Activated naive CD8-positive, alpha-beta T cell treated with anti-CD3 and anti-CD28 coated beads, Interleukin-2, amount 10 ng/mL, durations not matched to agents 7 days and 5 days (primary cell): ENCODE measurements at regions of chr17 and their contacts with region 1.

Region 1: GRCh38 chr17:43316522-43317142 is 82.2 kb upstream of the ARL4D start:
- DNase-seq: peak; percentile 47
- ATAC-seq: no peak
- H3K4me3 Mint-ChIP-seq: no peak overlapping the region
- H3K27ac Mint-ChIP-seq: peak overlapping the region; percentile 68
- H3K4me1 Mint-ChIP-seq: peaks cover 7% of the 10 kb centered on the region
- H3K27me3 Mint-ChIP-seq: no peaks in the 10 kb centered on the region

Region 2: DNA sequence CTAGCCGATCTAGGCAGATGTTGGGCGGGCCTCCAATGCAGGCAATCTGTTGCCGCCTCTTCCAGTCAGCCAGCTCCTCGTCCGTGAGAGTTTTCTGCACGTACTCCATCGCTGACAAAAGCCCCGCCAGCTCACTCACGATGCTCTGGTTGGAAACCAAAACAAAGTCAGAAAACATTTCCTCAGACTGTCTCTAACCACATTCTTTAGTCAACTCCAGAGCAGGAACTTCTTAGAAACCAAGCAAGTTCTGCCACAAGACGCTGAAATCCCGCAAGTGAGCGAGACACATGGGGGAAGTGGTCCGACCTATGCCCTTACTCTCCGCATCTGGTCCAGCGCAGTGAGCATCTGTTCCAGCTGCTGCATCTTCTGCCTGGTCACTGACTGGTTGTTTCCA is 979.2 kb before region 1 on chr17:
- POLR2A ChIA-PET with region 1: no interaction called
- DNase-seq: peak; percentile 63
- ATAC-seq: peak; percentile 78
- H3K4me3 Mint-ChIP-seq: peak overlapping the region; percentile 74
- H3K27ac Mint-ChIP-seq: peak overlapping the region; percentile 84
- H3K4me1 Mint-ChIP-seq: peaks cover 50% of the 10 kb centered on the region
- H3K27me3 Mint-ChIP-seq: no peaks in the 10 kb centered on the region

Region 3: GRCh38 chr17:43024407-43025289 is 292.0 kb before region 1 on chr17 and contains the start of gene RND2:
- POLR2A ChIA-PET with region 1: interaction called, 13 read pairs
- DNase-seq: peak; percentile 73
- ATAC-seq: peak; percentile 61
- H3K4me3 Mint-ChIP-seq: peak within 1 kb of the TSS; percentile 87
- H3K27ac Mint-ChIP-seq: peak within 1 kb of the TSS; percentile 43
- H3K4me1 Mint-ChIP-seq: peaks cover 15% of the 10 kb centered on the region
- H3K27me3 Mint-ChIP-seq: peaks cover 28% of the 10 kb centered on the region
- total RNA-seq, gene RND2: 0.14 TPM in 1 of 2 experiments, not detected in the other

Region 4: DNA sequence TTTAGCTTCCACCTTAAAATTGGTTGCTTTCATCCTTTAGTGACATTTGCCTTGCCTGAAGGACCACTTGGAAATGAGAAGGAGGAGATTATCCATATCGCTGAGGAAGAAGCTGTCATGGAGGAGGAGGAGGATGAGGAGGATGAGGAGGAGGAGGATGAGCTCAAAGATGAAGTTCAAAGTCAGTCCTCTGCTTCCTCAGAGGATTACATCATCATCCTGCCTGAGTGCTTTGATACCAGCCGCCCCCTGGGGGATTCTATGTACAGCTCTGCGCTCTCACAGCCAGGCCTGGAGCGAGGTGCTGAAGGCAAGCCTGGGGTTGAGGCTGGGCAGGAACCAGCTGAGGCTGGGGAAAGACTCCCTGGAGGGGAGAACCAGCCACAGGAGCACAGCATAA is 116.5 kb before region 1 on chr17:
- POLR2A ChIA-PET with region 1: interaction called, 10 read pairs
- DNase-seq: no peak
- ATAC-seq: no peak
- H3K4me3 Mint-ChIP-seq: no peak overlapping the region
- H3K27ac Mint-ChIP-seq: no peak overlapping the region
- H3K4me1 Mint-ChIP-seq: peaks cover 5% of the 10 kb centered on the region
- H3K27me3 Mint-ChIP-seq: no peaks in the 10 kb centered on the region

Region 5: GRCh38 chr17:43330876-43331639 is 14.4 kb after region 1 on chr17:
- POLR2A ChIA-PET with region 1: interaction called, 11 read pairs
- DNase-seq: no peak
- ATAC-seq: no peak
- H3K4me3 Mint-ChIP-seq: no peak overlapping the region
- H3K27ac Mint-ChIP-seq: no peak overlapping the region
- H3K4me1 Mint-ChIP-seq: peaks cover 8% of the 10 kb centered on the region
- H3K27me3 Mint-ChIP-seq: peaks cover 21% of the 10 kb centered on the region

Region 6: GRCh38 chr17:43388359-43389045 is 71.9 kb after region 1 on chr17:
- POLR2A ChIA-PET with region 1: interaction called, 13 read pairs
- DNase-seq: peak; percentile 96
- ATAC-seq: peak; percentile 61
- H3K4me3 Mint-ChIP-seq: peak overlapping the region; percentile 90
- H3K27ac Mint-ChIP-seq: peak overlapping the region; percentile 98
- H3K4me1 Mint-ChIP-seq: peaks cover 13% of the 10 kb centered on the region
- H3K27me3 Mint-ChIP-seq: no peaks in the 10 kb centered on the region